CD4-positive, alpha-beta T cell (primary cell): ENCODE measurements at regions of chr6 and their contacts with region 1.

Region 1: DNA sequence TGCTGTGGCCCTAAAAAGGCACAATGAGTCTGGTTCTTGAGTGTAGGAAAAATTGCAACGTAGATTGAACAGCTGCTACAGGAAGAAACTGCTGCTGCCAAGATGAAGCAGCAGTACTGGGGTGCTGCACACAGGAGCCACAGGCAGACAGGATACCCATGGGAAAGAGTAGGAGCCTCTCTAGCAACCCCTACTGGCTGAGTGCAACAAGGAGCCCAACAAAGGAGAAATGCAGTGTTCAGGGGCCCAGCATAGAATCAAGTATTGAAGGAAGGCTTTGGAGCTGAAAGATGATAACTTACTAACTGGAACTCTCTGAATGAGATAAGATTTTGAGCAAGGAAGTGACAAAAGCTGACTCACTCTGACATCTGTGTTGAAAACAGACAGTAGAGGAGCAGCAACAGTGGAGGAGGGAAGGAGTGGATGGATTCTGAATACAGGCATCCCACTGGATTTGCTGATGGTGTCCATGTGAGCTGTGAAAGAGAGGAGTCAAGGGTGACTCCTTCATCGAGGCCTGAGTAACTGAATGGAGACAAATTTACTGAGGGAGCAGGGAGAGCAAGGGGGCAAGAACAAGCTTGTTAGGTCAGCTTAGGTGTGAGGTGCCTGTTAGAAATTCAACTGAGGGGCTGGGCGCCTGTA is 534.7 kb upstream of the JARID2 start:
- DNase-seq: peak in 7 of 14 experiments; percentile 11 to 74 (median 52)
- ATAC-seq: peak; percentile 63
- H3K4me3 ChIP-seq: no peak overlapping the region
- H3K4me3 Mint-ChIP-seq: no peak overlapping the region
- H3K27ac ChIP-seq: no peak overlapping the region
- H3K27ac Mint-ChIP-seq: no peak overlapping the region
- H3K4me1 ChIP-seq: peaks cover 16% of the 10 kb centered on the region
- H3K4me1 Mint-ChIP-seq: peaks cover 14% of the 10 kb centered on the region
- H3K27me3 ChIP-seq: no peaks in the 10 kb centered on the region
- H3K27me3 Mint-ChIP-seq: no peaks in the 10 kb centered on the region
- CTCF ChIP-seq: no peak

Region 2: GRCh38 chr6:14765106-14765505 is 53.9 kb after region 1 on chr6:
- CTCF ChIA-PET with region 1: no interaction called
- POLR2A ChIA-PET with region 1: no interaction called
- intact Hi-C with region 1: loop called in 1 of 2 experiments (anchors 5 kb)
- DNase-seq: peak in 2 of 14 experiments; percentile 23 to 24
- ATAC-seq: no peak
- H3K4me3 ChIP-seq: no peak overlapping the region
- H3K4me3 Mint-ChIP-seq: no peak overlapping the region
- H3K27ac ChIP-seq: no peak overlapping the region
- H3K27ac Mint-ChIP-seq: no peak overlapping the region
- H3K4me1 ChIP-seq: no peaks in the 10 kb centered on the region
- H3K4me1 Mint-ChIP-seq: no peaks in the 10 kb centered on the region
- H3K27me3 ChIP-seq: no peaks in the 10 kb centered on the region
- H3K27me3 Mint-ChIP-seq: no peaks in the 10 kb centered on the region
- CTCF ChIP-seq: no peak

Region 3: DNA sequence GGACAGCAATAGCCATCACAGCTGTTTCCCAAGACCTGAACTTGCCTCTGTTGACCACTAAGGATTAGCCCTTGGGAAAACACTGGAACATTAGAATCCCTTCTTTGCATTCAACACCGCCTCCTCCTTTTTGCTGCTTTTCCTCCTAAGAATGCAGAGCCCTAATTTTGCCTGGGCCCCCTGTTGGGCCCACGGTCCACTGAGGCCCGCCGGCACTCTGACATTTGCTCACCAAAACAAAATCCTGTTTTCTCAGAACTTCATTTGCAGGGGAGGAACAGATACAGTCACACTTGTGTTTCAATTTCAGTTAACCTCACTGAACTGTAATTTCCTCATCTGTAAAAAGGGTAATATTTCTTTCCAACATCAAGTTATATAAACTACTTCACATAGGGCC is 418.7 kb after region 1 on chr6:
- CTCF ChIA-PET with region 1: no interaction called
- POLR2A ChIA-PET with region 1: no interaction called
- intact Hi-C with region 1: no loop called
- DNase-seq: no peak
- ATAC-seq: no peak
- H3K4me3 ChIP-seq: no peak overlapping the region
- H3K4me3 Mint-ChIP-seq: no peak overlapping the region
- H3K27ac ChIP-seq: no peak overlapping the region
- H3K27ac Mint-ChIP-seq: no peak overlapping the region
- H3K4me1 ChIP-seq: no peaks in the 10 kb centered on the region
- H3K4me1 Mint-ChIP-seq: no peaks in the 10 kb centered on the region
- H3K27me3 ChIP-seq: no peaks in the 10 kb centered on the region
- H3K27me3 Mint-ChIP-seq: no peaks in the 10 kb centered on the region
- CTCF ChIP-seq: no peak